ENCODE measurements at regions of chr19 and their contacts with region 1.

Region 1: DNA sequence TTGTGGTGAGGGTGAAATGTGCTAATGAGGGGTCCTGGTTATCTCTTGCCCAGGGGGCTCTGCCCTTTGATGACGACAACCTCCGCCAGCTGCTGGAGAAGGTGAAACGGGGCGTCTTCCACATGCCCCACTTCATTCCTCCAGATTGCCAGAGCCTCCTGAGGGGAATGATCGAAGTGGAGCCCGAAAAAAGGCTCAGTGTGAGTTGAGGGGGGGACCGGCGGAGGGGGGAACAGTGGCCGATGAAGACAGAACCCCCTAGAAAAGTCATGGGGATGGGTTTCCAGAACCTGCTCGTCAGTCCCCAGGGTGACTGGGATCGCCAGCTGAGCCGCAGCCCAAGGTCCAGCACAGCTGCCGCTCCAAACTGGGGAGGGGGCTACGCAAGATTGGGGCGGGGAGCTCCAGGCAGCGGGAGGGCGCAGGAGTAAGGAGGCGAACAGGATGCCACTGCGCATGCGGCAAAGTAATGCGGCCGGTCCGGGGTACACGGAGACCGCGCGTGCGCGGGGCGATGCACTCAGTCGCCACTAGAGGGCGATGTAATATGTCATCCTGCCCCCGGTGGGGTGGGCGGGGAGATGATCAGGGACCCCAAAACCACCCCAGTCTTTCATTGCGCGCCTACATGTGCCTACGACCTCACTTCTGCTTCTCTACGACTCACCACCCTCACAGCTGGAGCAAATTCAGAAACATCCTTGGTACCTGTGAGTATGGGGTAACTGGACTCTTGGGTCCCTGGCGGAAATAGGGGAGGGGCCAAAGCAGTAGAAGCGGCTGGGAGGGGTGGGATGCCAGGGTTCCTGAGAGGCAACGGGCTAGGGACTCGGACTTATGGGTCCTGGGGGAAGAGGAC is 17.9 kb downstream of the BRSK1 start:
- DNase-seq: peak; percentile 78
- H3K4me3 ChIP-seq: peak overlapping the region in 1 of 2 donors; percentile 25
- H3K27ac ChIP-seq: no peak overlapping the region
- H3K4me1 ChIP-seq: no peaks in the 10 kb centered on the region
- H3K27me3 ChIP-seq: no peaks in the 10 kb centered on the region
- CTCF ChIP-seq: peak; percentile 95 to 99 (median 98)
- POLR2A ChIP-seq: peak; percentile 13

Region 2: DNA sequence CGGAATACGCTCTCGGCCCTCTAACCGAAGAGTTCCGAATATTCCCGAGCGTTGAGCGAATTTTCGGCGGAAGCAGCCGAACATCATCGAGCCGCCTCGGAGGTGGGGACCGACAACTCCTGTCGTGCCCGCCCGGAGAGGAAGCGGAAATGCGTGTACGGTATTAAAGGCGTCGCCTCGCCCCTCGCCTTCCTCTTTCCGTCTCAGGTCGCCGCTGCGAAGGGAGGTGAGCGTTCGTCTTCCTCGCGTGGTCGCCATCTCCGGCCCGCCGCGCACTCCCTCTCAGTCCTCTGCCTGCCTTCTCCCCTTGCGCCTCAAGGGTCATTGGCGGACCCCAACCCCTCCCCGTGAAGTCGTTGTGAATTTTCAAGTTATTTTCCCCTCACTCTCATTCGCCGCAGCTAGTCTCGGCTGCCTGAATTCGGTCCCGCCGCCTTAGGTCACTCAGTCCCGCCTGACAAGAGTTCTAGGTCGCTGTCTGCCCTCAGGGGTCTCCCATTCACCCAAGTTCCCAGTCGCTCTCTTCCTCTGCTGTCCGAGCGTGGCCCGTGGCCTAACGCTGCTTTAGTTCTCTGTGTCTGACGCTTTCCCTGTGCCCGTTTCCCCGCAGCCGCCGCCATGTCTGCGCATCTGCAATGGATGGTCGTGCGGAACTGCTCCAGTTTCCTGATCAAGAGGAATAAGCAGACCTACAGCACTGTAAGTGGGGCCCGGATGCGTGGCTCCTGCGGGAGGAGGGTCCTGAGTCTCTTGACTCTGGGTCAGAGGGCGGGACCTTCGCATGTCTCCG is 84.2 kb after region 1 on chr19 and contains the start of gene RPL28:
- intact Hi-C with region 1: loop called (anchors 5 kb)
- DNase-seq: peak; percentile 99
- H3K4me3 ChIP-seq: peak within 1 kb of the TSS; percentile 74 to 78
- H3K27ac ChIP-seq: peak within 1 kb of the TSS; percentile 93 to 96
- H3K4me1 ChIP-seq: peaks cover 30% of the 10 kb centered on the region
- H3K27me3 ChIP-seq: no peaks in the 10 kb centered on the region
- CTCF ChIP-seq: peak in 1 of 4 experiments; percentile 6
- POLR2A ChIP-seq: peak; percentile 99
- total RNA-seq, gene RPL28: 439 to 554 TPM

Measured in prostate gland (tissue), 2 donors.